ENCODE measurements at regions of chr14 and their contacts with region 1.

Region 1: GRCh38 chr14:63493246-63493645 is 49.9 kb downstream of the PPP2R5E start:
- DNase-seq: no peak
- ATAC-seq: peak; percentile 74
- H3K4me3 ChIP-seq: no peak overlapping the region
- H3K27ac ChIP-seq: no peak overlapping the region
- H3K4me1 ChIP-seq: no peaks in the 10 kb centered on the region
- H3K27me3 ChIP-seq: no peaks in the 10 kb centered on the region
- CTCF ChIP-seq: peak; percentile 11 to 30 (median 13); a peak in 1 of 6 replicates
- EP300 ChIP-seq: no peak
- POLR2A ChIP-seq: no peak
- RAD21 ChIP-seq: peak; percentile 25; the same call in 1 of the 2 replicates

Region 2: GRCh38 chr14:63388763-63389431 is 104.3 kb before region 1 on chr14:
- CTCF ChIA-PET with region 1: interaction called, 10 read pairs
- POLR2A ChIA-PET with region 1: interaction called, 6 read pairs
- RAD21 ChIA-PET with region 1: interaction called, 5 read pairs
- SMC1A ChIA-PET with region 1: interaction called, 4 read pairs
- in situ Hi-C with region 1: no loop called
- intact Hi-C with region 1: no loop called
- DNase-seq: peak; percentile 24
- ATAC-seq: peak; percentile 98
- H3K4me3 ChIP-seq: no peak overlapping the region
- H3K27ac ChIP-seq: no peak overlapping the region
- H3K4me1 ChIP-seq: peaks cover 2% of the 10 kb centered on the region; the same call in 1 of the 2 replicates
- H3K27me3 ChIP-seq: no peaks in the 10 kb centered on the region
- CTCF ChIP-seq: peak; percentile 88 to 89 (median 88)
- EP300 ChIP-seq: no peak
- POLR2A ChIP-seq: no peak
- RAD21 ChIP-seq: peak; percentile 96

Region 3: DNA sequence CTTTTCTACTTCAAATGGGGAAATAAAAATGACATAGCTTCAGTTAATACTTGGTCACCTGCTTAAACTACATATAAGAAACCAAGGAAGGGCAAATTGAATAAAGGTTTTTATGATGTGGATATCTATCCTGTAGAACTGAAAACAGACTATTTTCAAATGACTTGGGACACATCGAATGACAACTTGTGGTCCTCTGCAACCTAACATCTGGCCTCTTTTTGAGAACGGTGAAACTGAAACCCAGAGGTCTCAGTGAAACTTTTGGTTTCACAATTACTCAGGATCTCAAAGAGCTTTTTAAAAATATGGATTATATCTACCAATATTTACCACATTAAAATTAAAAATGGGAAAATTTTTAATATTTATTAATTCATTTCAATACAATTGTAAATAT is 15.2 kb before region 1 on chr14:
- CTCF ChIA-PET with region 1: interaction called, 11 read pairs
- POLR2A ChIA-PET with region 1: interaction called, 3 read pairs
- RAD21 ChIA-PET with region 1: interaction called, 4 read pairs
- SMC1A ChIA-PET with region 1: interaction called, 10 read pairs
- in situ Hi-C with region 1: no loop called
- intact Hi-C with region 1: no loop called
- DNase-seq: peak; percentile 79
- ATAC-seq: peak; percentile 88
- H3K4me3 ChIP-seq: 0 out of 2 replicates have a peak overlapping the region, but pooled peaks have one; percentile 28
- H3K27ac ChIP-seq: peak overlapping the region; percentile 81
- H3K4me1 ChIP-seq: peaks cover 29% of the 10 kb centered on the region
- H3K27me3 ChIP-seq: no peaks in the 10 kb centered on the region
- CTCF ChIP-seq: no peak
- EP300 ChIP-seq: peak in 1 of 2 experiments; percentile 81; a peak in 2 of 4 replicates
- POLR2A ChIP-seq: no peak
- RAD21 ChIP-seq: no peak

Region 4: GRCh38 chr14:63504619-63505276 is 11.5 kb after region 1 on chr14:
- CTCF ChIA-PET with region 1: interaction called, 16 read pairs
- POLR2A ChIA-PET with region 1: interaction called, 3 read pairs
- RAD21 ChIA-PET with region 1: interaction called, 3 read pairs
- SMC1A ChIA-PET with region 1: interaction called, 23 read pairs
- in situ Hi-C with region 1: no loop called
- intact Hi-C with region 1: no loop called
- DNase-seq: no peak
- ATAC-seq: no peak
- H3K4me3 ChIP-seq: no peak overlapping the region
- H3K27ac ChIP-seq: no peak overlapping the region
- H3K4me1 ChIP-seq: peaks cover 7% of the 10 kb centered on the region
- H3K27me3 ChIP-seq: no peaks in the 10 kb centered on the region
- CTCF ChIP-seq: no peak
- EP300 ChIP-seq: no peak
- POLR2A ChIP-seq: no peak
- RAD21 ChIP-seq: no peak

Region 5: GRCh38 chr14:63510538-63510937 is 17.3 kb after region 1 on chr14:
- CTCF ChIA-PET with region 1: interaction called, 16 read pairs
- POLR2A ChIA-PET with region 1: interaction called, 7 read pairs
- RAD21 ChIA-PET with region 1: interaction called, 6 read pairs
- SMC1A ChIA-PET with region 1: interaction called, 23 read pairs
- in situ Hi-C with region 1: no loop called
- intact Hi-C with region 1: no loop called
- DNase-seq: peak; percentile 66
- ATAC-seq: peak; percentile 86
- H3K4me3 ChIP-seq: no peak overlapping the region
- H3K27ac ChIP-seq: peak overlapping the region; percentile 5
- H3K4me1 ChIP-seq: peaks cover 14% of the 10 kb centered on the region
- H3K27me3 ChIP-seq: no peaks in the 10 kb centered on the region
- CTCF ChIP-seq: no peak
- EP300 ChIP-seq: no peak
- POLR2A ChIP-seq: no peak
- RAD21 ChIP-seq: no peak

Region 6: GRCh38 chr14:63562405-63562804 is 69.2 kb after region 1 on chr14:
- CTCF ChIA-PET with region 1: no interaction called
- POLR2A ChIA-PET with region 1: no interaction called
- RAD21 ChIA-PET with region 1: no interaction called
- SMC1A ChIA-PET with region 1: no interaction called
- in situ Hi-C with region 1: no loop called
- intact Hi-C with region 1: no loop called
- DNase-seq: no peak
- ATAC-seq: no peak
- H3K4me3 ChIP-seq: no peak overlapping the region
- H3K27ac ChIP-seq: no peak overlapping the region
- H3K4me1 ChIP-seq: no peaks in the 10 kb centered on the region
- H3K27me3 ChIP-seq: no peaks in the 10 kb centered on the region
- CTCF ChIP-seq: no peak
- EP300 ChIP-seq: no peak
- POLR2A ChIP-seq: no peak
- RAD21 ChIP-seq: no peak

Region 7: GRCh38 chr14:63692310-63693020 is 199.2 kb after region 1 on chr14:
- CTCF ChIA-PET with region 1: no interaction called
- POLR2A ChIA-PET with region 1: no interaction called
- RAD21 ChIA-PET with region 1: no interaction called
- SMC1A ChIA-PET with region 1: no interaction called
- in situ Hi-C with region 1: no loop called
- intact Hi-C with region 1: no loop called
- DNase-seq: no peak
- ATAC-seq: no peak
- H3K4me3 ChIP-seq: no peak overlapping the region
- H3K27ac ChIP-seq: no peak overlapping the region
- H3K4me1 ChIP-seq: no peaks in the 10 kb centered on the region
- H3K27me3 ChIP-seq: no peaks in the 10 kb centered on the region
- CTCF ChIP-seq: no peak
- EP300 ChIP-seq: no peak
- POLR2A ChIP-seq: no peak
- RAD21 ChIP-seq: no peak